ENCODE measurements at regions of chr19 and their contacts with region 1.

Region 1: GRCh38 chr19:17766543-17767131 is 15.4 kb downstream of the FCHO1 start:
- DNase-seq: peak; percentile 94
- H3K4me3 ChIP-seq: no peak overlapping the region
- H3K27ac ChIP-seq: peak overlapping the region; percentile 49 to 68 (median 60)
- H3K4me1 ChIP-seq: peaks cover 6 to 16% (median 10%) of the 10 kb centered on the region in 4 donors
- H3K27me3 ChIP-seq: no peaks in the 10 kb centered on the region
- CTCF ChIP-seq: peak; percentile 75 to 91 (median 79)
- EP300 ChIP-seq: no peak
- POLR2A ChIP-seq: no peak

Region 2: GRCh38 chr19:17522988-17523872 is 243.4 kb before region 1 on chr19:
- in situ Hi-C with region 1: no loop called
- intact Hi-C with region 1: no loop called
- DNase-seq: peak; percentile 73
- H3K4me3 ChIP-seq: no peak overlapping the region
- H3K27ac ChIP-seq: peak overlapping the region; percentile 46 to 62 (median 53)
- H3K4me1 ChIP-seq: peaks cover 0 to 13% (median 0%) of the 10 kb centered on the region in 4 donors
- H3K27me3 ChIP-seq: peaks cover 14% of the 10 kb centered on the region
- CTCF ChIP-seq: no peak
- EP300 ChIP-seq: no peak
- POLR2A ChIP-seq: no peak

Region 3: DNA sequence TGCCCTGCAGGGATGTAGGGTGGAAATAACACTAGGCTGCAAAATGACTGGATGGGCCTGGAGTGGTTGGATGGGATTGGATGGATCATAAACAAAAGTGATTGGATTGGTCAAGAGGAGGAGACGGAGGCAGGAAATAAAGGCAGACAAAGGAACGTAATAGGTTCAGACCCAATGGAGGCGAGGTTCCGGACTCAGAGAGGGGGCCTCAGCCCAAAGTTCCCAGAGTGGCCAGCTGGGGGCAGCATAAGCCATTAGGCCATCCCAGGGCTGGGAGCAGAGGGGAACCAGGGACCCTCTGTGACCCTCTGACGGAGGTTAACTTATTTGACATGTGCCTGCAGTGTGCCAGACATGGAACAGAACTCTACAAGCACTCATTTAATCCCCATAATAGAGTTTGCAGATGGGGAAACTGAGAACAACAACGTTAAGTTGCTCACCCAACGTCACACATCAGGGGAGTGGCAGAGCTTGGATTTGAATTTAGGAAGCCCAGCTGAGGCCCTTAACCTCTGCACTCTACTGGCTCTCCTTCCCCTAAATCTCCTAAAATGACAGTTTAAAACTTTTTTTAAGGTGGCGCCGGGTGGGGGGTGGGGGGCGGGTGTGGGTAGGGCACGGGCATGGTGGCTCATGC is 62.7 kb before region 1 on chr19:
- in situ Hi-C with region 1: loop called in 2 of 4 experiments (anchors 10 kb)
- intact Hi-C with region 1: loop called (anchors 5 kb)
- DNase-seq: peak; percentile 67
- H3K4me3 ChIP-seq: no peak overlapping the region
- H3K27ac ChIP-seq: no peak overlapping the region
- H3K4me1 ChIP-seq: no peaks in the 10 kb centered on the region
- H3K27me3 ChIP-seq: peaks cover 4% of the 10 kb centered on the region
- CTCF ChIP-seq: peak; percentile 80 to 89 (median 84)
- EP300 ChIP-seq: no peak
- POLR2A ChIP-seq: no peak

Region 4: GRCh38 chr19:17718947-17719711 is 47.5 kb before region 1 on chr19 and contains the start of gene MAP1S:
- in situ Hi-C with region 1: no loop called
- intact Hi-C with region 1: loop called (anchors 1 kb)
- DNase-seq: peak; percentile 63
- H3K4me3 ChIP-seq: peak within 1 kb of the TSS; percentile 75 to 97 (median 87)
- H3K27ac ChIP-seq: peak within 1 kb of the TSS; percentile 72 to 86 (median 82)
- H3K4me1 ChIP-seq: peaks cover 19 to 46% (median 38%) of the 10 kb centered on the region in 4 donors
- H3K27me3 ChIP-seq: no peaks in the 10 kb centered on the region
- CTCF ChIP-seq: no peak
- EP300 ChIP-seq: no peak
- POLR2A ChIP-seq: peak; percentile 73
- total RNA-seq, gene MAP1S: 30.2 to 159 (median 68.0) TPM